GM12878 (cell line): ENCODE measurements at regions of chr12 and their contacts with region 1.

Region 1: DNA sequence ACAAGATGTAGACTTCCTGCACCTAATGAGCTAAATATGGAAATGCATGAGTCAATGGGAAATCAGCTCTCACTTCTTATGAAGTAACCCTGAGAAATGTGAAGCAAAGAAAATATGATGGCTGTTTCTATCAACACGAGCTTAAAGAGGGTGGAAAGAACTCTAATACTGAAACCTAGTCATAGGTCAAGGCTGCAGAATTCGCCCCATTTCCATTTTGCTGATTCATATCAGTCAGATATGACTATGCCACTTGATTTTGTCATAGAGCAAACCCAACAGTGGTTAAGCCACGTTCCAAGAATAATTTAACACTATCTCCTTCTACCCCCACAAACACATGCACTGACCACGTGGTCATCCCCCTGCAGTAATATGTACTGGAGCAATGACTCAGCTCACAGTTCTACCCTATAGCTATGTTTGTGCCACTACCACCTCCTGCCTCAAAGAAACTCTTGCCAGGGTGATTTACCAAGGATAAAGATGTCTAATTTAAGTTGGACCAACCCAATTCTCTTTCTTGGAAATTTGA is 157.5 kb downstream of the TMTC3 start:
- DNase-seq: peak; percentile 91
- ATAC-seq: peak; percentile 92
- H3K4me3 ChIP-seq: no peak overlapping the region
- H3K27ac ChIP-seq: peak overlapping the region; percentile 71; the same call in 1 of the 2 replicates
- H3K4me1 ChIP-seq: peaks cover 5% of the 10 kb centered on the region; the same call in 1 of the 2 replicates
- H3K27me3 ChIP-seq: no peaks in the 10 kb centered on the region
- CTCF ChIP-seq: no peak
- EP300 ChIP-seq: peak; percentile 88 to 89; a peak in 3 of 4 replicates
- POLR2A ChIP-seq: no peak
- RAD21 ChIP-seq: no peak; the same call in 1 of the 2 replicates

Region 2: GRCh38 chr12:88141770-88142609 is 157.6 kb before region 1 on chr12 and contains the starts of genes CEP290 and TMTC3:
- CTCF ChIA-PET with region 1: interaction called, 3 read pairs
- POLR2A ChIA-PET with region 1: interaction called, 5 read pairs
- RAD21 ChIA-PET with region 1: interaction called, 10 read pairs
- SMC1A ChIA-PET with region 1: interaction called, 15 read pairs
- in situ Hi-C with region 1: no loop called
- intact Hi-C with region 1: loop called (anchors 5 kb)
- DNase-seq: peak; percentile 97
- ATAC-seq: peak; percentile 94
- H3K4me3 ChIP-seq: peak within 1 kb of the TSS; percentile 96
- H3K27ac ChIP-seq: peak within 1 kb of the TSS; percentile 75
- H3K4me1 ChIP-seq: no peaks in the 10 kb centered on the region
- H3K27me3 ChIP-seq: no peaks in the 10 kb centered on the region
- CTCF ChIP-seq: no peak
- EP300 ChIP-seq: no peak
- POLR2A ChIP-seq: peak; percentile 84
- RAD21 ChIP-seq: no peak
- polyA plus RNA-seq, gene CEP290: 4.8 to 8.9 TPM
- polyA plus RNA-seq, gene TMTC3: 1.5 to 2.8 TPM

Region 3: DNA sequence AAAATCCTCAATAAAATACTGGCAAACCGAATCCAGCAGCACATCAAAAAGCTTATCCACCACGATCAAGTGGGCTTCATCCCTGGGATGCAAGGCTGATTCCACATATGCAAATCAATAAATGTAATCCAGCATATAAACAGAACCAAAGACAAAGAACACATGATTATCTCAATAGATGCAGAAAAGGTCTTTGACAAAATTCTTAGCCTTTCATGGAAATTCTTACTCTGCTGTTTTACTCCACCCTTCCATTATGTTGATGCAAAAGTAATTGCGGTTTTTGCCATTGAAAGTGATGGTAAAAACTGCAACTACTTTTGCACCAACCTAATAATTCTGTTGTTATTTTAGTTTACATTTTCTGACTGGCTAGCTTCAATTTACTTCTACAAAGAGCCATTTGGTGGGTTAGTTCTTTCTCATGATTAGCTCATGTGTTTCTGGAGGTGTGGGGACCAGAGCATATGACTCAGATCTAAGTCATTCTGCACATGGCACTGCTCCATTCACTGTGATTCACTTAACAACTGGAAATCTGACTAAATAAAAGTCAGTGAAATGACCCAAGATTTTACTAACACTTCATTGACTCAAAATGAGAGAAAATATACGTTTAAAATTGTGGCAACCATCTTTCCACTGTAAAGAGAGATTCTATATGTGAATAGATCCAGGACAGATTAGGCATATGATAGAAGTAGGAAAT is 57.6 kb before region 1 on chr12:
- CTCF ChIA-PET with region 1: no interaction called
- POLR2A ChIA-PET with region 1: no interaction called
- RAD21 ChIA-PET with region 1: interaction called, 17 read pairs
- SMC1A ChIA-PET with region 1: interaction called, 17 read pairs
- in situ Hi-C with region 1: no loop called
- intact Hi-C with region 1: loop called (anchors 2 kb)
- DNase-seq: no peak
- ATAC-seq: peak; percentile 87
- H3K4me3 ChIP-seq: no peak overlapping the region
- H3K27ac ChIP-seq: no peak overlapping the region
- H3K4me1 ChIP-seq: no peaks in the 10 kb centered on the region
- H3K27me3 ChIP-seq: no peaks in the 10 kb centered on the region
- CTCF ChIP-seq: no peak
- EP300 ChIP-seq: no peak
- POLR2A ChIP-seq: no peak
- RAD21 ChIP-seq: no peak

Region 4: GRCh38 chr12:88334271-88334670 is 34.6 kb after region 1 on chr12:
- CTCF ChIA-PET with region 1: interaction called, 9 read pairs
- POLR2A ChIA-PET with region 1: interaction called, 6 read pairs
- RAD21 ChIA-PET with region 1: interaction called, 5 read pairs
- SMC1A ChIA-PET with region 1: interaction called, 23 read pairs
- in situ Hi-C with region 1: no loop called
- intact Hi-C with region 1: loop called (anchors 2 kb)
- DNase-seq: peak; percentile 15
- ATAC-seq: peak; percentile 88
- H3K4me3 ChIP-seq: no peak overlapping the region
- H3K27ac ChIP-seq: peak overlapping the region; percentile 10; the same call in 1 of the 2 replicates
- H3K4me1 ChIP-seq: no peaks in the 10 kb centered on the region; the same call in 1 of the 2 replicates
- H3K27me3 ChIP-seq: no peaks in the 10 kb centered on the region
- CTCF ChIP-seq: no peak
- EP300 ChIP-seq: no peak
- POLR2A ChIP-seq: no peak
- RAD21 ChIP-seq: no peak

Region 5: DNA sequence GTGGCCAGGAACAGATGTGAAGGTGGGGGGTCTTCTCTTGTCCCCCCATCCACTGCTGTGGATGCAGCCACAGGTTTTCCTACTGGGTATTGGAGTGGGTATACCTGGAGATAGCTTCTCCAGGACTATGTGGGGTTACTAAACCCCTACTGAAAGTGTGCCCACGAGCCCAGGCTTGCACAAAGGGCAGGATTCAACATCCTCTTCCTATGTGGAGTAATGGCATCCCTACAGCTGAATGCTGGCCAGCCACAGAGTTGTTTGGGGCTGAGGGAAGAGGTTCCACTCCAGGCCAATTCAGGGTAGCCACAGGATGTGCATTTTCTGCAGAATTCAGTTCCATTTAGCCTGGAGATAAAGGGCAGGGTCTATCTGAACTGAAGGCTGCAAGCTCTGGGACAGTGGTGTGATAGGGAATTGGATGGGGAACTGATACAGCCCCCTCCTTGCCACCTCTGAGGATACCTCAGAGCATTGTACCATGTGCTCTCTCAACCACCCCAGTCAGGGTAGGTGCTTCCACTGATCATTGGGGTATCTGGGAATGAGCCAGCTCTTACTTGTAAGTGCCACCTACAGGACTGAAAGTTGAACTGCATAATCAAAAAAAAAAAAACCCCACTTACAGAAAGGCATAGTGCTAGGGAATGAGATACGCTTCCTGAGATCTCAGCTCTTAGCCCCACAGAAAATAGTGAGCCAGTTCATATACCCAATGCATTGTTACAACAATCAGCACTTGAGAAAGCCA is 93.6 kb after region 1 on chr12:
- CTCF ChIA-PET with region 1: interaction called, 6 read pairs
- POLR2A ChIA-PET with region 1: interaction called, 19 read pairs
- RAD21 ChIA-PET with region 1: interaction called, 32 read pairs
- SMC1A ChIA-PET with region 1: interaction called, 69 read pairs
- in situ Hi-C with region 1: loop called (anchors 5 kb)
- intact Hi-C with region 1: loop called (anchors 1 kb)
- DNase-seq: no peak
- ATAC-seq: peak; percentile 33
- H3K4me3 ChIP-seq: no peak overlapping the region
- H3K27ac ChIP-seq: no peak overlapping the region
- H3K4me1 ChIP-seq: peaks cover 6% of the 10 kb centered on the region
- H3K27me3 ChIP-seq: no peaks in the 10 kb centered on the region
- CTCF ChIP-seq: peak; percentile 35 to 43 (median 38); a peak in 5 of 6 replicates
- EP300 ChIP-seq: no peak
- POLR2A ChIP-seq: no peak
- RAD21 ChIP-seq: peak; percentile 62

Region 6: DNA sequence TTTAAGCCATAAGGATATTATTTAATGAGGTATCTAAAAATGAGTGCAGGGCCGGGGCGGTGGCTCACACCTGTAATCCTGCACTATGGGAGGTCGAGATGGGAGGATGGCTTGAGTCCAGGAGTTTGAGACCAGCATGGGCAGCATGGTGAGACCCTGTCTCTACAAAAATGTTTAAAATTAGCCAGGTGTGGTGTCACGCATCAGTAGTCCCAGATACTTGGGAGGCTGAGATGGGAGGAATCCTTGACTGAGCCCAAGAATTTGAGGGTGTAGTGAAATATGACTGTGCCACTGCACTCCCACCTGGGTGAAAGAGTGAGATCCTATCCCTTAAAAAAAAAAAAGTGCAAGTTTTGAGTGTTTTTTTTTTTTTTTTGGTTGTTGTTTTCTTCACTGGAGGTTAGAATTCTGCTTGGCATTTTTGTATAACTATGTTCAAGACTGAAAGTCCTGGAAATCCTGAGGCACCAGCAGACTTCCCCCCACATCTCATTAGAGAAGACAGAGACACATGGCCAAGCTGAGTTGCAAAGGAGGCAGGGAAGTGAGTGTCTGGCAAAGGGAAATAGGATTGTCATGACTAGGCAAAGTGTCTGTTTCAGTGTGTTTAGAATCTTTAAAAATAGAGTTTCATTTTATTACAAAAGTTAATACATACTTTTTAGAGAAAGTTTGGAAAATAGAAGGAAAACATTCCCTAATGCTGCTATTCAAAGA is 1106.2 kb after region 1 on chr12:
- CTCF ChIA-PET with region 1: no interaction called
- POLR2A ChIA-PET with region 1: no interaction called
- RAD21 ChIA-PET with region 1: no interaction called
- SMC1A ChIA-PET with region 1: no interaction called
- in situ Hi-C with region 1: no loop called
- intact Hi-C with region 1: no loop called
- DNase-seq: no peak
- ATAC-seq: no peak
- H3K4me3 ChIP-seq: no peak overlapping the region
- H3K27ac ChIP-seq: no peak overlapping the region
- H3K4me1 ChIP-seq: no peaks in the 10 kb centered on the region
- H3K27me3 ChIP-seq: no peaks in the 10 kb centered on the region
- CTCF ChIP-seq: no peak
- EP300 ChIP-seq: no peak
- POLR2A ChIP-seq: no peak
- RAD21 ChIP-seq: no peak